ENCODE measurements at regions of chr6 and their contacts with region 1.

Region 1: DNA sequence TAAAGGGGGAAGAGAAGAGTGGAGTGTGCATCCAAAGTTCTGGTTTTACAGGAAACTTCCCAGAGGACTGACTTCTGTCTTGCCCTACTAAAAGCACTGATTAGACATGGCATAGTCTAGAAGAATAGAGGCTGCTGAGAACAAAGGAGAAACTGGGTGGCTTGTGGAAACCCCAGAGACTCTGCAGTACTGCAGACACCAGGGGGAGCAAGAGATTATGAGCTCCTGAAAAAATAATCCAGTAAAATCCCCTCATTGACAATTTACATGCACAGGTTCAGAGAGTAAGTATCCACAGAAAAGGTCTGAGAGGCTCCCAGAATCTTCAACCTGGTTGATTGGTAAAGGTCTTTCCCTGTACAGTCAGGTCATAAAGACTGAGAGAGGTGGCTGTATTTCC is 48.7 kb upstream of the CLVS2 start:
- DNase-seq: peak; percentile 43
- H3K4me3 Mint-ChIP-seq: no peak overlapping the region
- H3K27ac Mint-ChIP-seq: no peak overlapping the region
- H3K4me1 Mint-ChIP-seq: no peaks in the 10 kb centered on the region
- H3K27me3 Mint-ChIP-seq: no peaks in the 10 kb centered on the region
- CTCF ChIP-seq: peak; percentile 50

Region 2: DNA sequence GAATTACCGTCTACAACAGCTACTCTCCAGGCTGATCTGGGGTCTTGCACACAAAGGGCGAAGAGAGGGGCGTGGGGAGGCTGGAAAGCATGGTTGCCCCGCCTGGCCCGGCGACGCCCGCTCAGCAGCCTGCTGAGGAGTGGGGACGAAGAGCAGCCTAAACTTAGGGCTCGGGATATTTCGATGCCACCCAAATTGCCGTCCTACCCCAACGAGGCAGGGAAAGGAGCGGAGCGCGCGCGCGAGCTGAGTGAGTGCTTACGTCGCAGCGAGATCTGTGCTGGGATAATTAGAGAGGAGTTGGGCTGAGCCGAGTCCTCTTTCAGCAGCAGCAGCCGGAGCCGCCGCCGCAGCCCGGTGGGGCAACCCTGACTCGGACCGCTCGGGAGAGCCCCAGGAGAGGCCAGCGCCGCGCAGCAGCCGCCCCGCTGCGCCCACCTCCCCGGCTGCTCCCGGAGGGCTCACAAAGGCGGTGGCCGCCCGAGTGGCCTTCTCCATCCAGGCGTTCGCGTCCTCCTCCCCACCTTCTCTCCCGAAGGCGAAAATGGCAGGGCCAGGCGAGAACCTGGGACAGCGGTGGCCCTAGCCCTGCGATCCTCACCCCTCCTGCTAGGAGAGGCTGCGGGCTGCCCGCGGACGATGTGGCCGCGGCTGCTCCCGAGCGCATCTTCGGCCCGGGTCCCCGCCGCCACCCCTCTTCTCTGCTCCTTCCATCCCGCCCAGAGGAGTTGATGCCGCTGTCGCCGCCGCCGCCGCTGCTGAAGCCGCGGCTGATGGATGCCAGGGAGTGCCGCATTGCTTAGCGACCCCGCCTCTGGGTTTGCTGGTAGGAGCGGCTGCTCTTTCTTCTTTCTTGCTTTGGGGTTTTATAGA is 48.8 kb after region 1 on chr6 and contains the start of gene CLVS2:
- CTCF ChIA-PET with region 1: no interaction called
- intact Hi-C with region 1: no loop called
- DNase-seq: peak; percentile 22
- H3K4me3 Mint-ChIP-seq: peak within 1 kb of the TSS; percentile 69
- H3K27ac Mint-ChIP-seq: no peak within 1 kb of the TSS
- H3K4me1 Mint-ChIP-seq: no peaks in the 10 kb centered on the region
- H3K27me3 Mint-ChIP-seq: peaks cover 46% of the 10 kb centered on the region
- CTCF ChIP-seq: no peak
- total RNA-seq, gene CLVS2: not detected in 2 replicates

Region 3: DNA sequence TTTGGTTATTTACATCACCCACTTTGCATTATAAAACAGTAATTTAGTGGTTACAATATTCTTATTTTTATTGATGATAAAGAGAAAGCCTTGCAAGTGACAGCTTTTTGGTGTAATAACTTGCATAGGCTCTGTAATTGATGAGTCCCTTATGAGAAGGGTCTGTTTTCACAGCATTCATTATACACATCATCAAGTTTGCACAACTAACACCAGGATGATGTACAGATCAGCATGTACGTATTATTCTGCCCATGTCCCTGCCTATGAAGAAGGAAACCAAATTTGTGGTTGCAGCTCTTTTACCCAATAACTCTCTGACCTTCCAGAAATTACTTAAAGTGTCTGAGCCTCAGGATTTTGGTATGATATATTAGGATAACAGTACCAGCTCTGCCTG is 107.9 kb after region 1 on chr6:
- CTCF ChIA-PET with region 1: no interaction called
- intact Hi-C with region 1: loop called (anchors 5 kb)
- DNase-seq: no peak
- H3K4me3 Mint-ChIP-seq: no peak overlapping the region
- H3K27ac Mint-ChIP-seq: no peak overlapping the region
- H3K4me1 Mint-ChIP-seq: peaks cover 16% of the 10 kb centered on the region
- H3K27me3 Mint-ChIP-seq: no peaks in the 10 kb centered on the region
- CTCF ChIP-seq: no peak

Region 4: GRCh38 chr6:123105561-123105960 is 158.2 kb after region 1 on chr6:
- CTCF ChIA-PET with region 1: no interaction called
- intact Hi-C with region 1: no loop called
- DNase-seq: no peak
- H3K4me3 Mint-ChIP-seq: no peak overlapping the region
- H3K27ac Mint-ChIP-seq: no peak overlapping the region
- H3K4me1 Mint-ChIP-seq: no peaks in the 10 kb centered on the region
- H3K27me3 Mint-ChIP-seq: no peaks in the 10 kb centered on the region
- CTCF ChIP-seq: no peak

Region 5: GRCh38 chr6:123159861-123160260 is 212.5 kb after region 1 on chr6:
- CTCF ChIA-PET with region 1: no interaction called
- intact Hi-C with region 1: no loop called
- DNase-seq: no peak
- H3K4me3 Mint-ChIP-seq: no peak overlapping the region
- H3K27ac Mint-ChIP-seq: no peak overlapping the region
- H3K4me1 Mint-ChIP-seq: no peaks in the 10 kb centered on the region
- H3K27me3 Mint-ChIP-seq: no peaks in the 10 kb centered on the region
- CTCF ChIP-seq: no peak

Region 6: GRCh38 chr6:123316733-123317323 is 369.5 kb after region 1 on chr6:
- CTCF ChIA-PET with region 1: interaction called, 3 read pairs
- intact Hi-C with region 1: loop called (anchors 2 kb)
- DNase-seq: no peak
- H3K4me3 Mint-ChIP-seq: no peak overlapping the region
- H3K27ac Mint-ChIP-seq: no peak overlapping the region
- H3K4me1 Mint-ChIP-seq: no peaks in the 10 kb centered on the region
- H3K27me3 Mint-ChIP-seq: no peaks in the 10 kb centered on the region
- CTCF ChIP-seq: peak; percentile 16

Measured in Calu3 (cell line).